Caco-2 (cell line): ENCODE measurements at regions of chr10 and their contacts with region 1.

Region 1: GRCh38 chr10:34689053-34689452 is 126.0 kb downstream of the PARD3 start:
- DNase-seq: no peak
- H3K4me3 ChIP-seq: no peak overlapping the region
- H3K4me3 Mint-ChIP-seq: no peak overlapping the region
- H3K27ac Mint-ChIP-seq: no peak overlapping the region
- H3K4me1 ChIP-seq: no peaks in the 10 kb centered on the region
- H3K4me1 Mint-ChIP-seq: peaks cover 7% of the 10 kb centered on the region
- H3K27me3 ChIP-seq: no peaks in the 10 kb centered on the region
- H3K27me3 Mint-ChIP-seq: no peaks in the 10 kb centered on the region
- CTCF ChIP-seq: no peak

Region 2: DNA sequence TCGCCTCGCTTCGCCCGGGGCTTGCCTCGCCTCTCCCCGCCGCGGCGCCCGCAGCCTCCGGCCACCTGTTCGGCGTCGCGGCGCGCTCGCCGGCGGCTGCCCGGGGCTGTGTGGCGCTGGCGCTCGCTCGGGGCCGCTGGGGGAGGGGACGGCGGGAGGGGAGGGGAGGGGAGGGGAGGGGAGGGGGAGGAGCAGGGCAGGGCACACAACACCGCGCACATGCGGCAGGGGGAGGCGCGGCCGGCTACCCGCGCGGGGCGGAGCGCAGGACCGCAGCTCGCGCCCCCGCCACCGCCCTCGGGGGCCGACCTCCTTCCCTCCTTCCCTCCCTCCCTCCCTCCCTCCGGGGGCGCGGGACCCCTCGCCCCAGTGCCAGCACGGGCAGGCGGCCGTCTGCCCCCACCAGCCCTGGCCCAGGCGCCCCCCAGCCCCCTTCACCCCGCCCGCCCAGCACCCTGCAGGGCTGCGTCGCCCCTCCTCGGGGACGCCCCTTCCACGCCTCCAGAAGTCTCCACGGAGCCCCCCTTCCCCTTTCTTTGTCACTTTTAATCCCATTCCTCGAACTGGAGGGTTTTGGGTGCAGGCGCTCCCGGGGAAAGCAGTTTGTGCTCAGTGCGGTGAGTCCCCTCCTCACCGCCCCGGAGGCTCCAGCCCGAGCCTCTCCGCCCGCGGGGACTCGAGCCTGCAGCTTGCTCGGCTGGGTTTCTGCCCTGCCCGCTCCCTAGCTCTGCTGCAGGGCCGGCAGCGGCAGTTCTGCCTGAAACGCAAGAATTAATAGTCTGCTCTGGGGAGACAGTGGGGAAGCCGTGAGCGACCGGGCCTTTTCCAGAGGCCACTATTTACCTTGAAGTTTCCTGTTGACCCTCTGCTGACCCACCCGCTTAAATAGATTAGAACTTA is 126.4 kb after region 1 on chr10 and contains the start of gene PARD3:
- CTCF ChIA-PET with region 1: no interaction called
- POLR2A ChIA-PET with region 1: no interaction called
- intact Hi-C with region 1: loop called (anchors 2 kb)
- DNase-seq: peak; percentile 80 to 82
- H3K4me3 ChIP-seq: peak within 1 kb of the TSS; percentile 92
- H3K4me3 Mint-ChIP-seq: peak within 1 kb of the TSS; percentile 79
- H3K27ac Mint-ChIP-seq: peak within 1 kb of the TSS; percentile 40
- H3K4me1 ChIP-seq: peaks cover 11% of the 10 kb centered on the region; the same call in 1 of the 2 replicates
- H3K4me1 Mint-ChIP-seq: peaks cover 36% of the 10 kb centered on the region
- H3K27me3 ChIP-seq: no peaks in the 10 kb centered on the region
- H3K27me3 Mint-ChIP-seq: no peaks in the 10 kb centered on the region
- CTCF ChIP-seq: peak in 1 of 2 experiments; percentile 19
- total RNA-seq, gene PARD3: 74.9 and 80.7 TPM in 2 replicates